T-cell (primary cell): ENCODE measurements at regions of chr9 and their contacts with region 1.

Region 1: DNA sequence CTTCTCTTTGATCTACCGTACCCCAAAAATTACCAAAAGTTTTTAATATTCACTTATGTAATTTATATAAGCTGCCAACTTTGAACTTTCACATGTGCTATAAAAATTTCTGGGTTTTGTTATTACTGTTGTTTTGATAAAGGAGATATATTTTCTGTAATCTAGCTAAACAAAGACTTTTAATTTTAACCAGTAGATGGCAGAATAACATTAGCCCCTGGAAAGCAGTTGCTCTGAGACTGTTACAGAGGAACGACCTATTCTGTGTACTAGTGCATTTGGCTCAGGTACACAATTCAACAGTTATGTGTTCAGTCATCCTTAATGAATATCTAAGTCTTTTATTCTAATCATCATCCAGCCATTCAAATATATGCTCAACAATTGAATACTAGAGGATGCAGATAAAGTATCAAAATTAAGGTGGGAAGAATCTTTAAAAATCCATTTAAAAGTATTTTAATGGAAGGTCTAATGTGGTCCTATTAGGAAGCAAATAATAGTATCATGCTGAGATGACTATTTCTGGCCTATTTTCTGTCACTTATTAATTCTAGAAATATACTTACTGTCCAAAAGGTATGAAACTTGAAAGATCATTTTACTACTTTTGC is 8.6 kb downstream of the KLHL9 start:
- DNase-seq: peak in 4 of 35 experiments; percentile 3 to 74 (median 5)
- ATAC-seq: peak; percentile 80 to 91 (median 88)
- H3K4me3 ChIP-seq: no peak overlapping the region
- H3K4me3 Mint-ChIP-seq: no peak overlapping the region
- H3K27ac ChIP-seq: no peak overlapping the region
- H3K27ac Mint-ChIP-seq: peak overlapping the region; percentile 62 to 74
- H3K4me1 ChIP-seq: peaks cover 5 to 17% of the 10 kb centered on the region in 2 experiments
- H3K4me1 Mint-ChIP-seq: peaks cover 50 to 59% (median 53%) of the 10 kb centered on the region in 3 donors
- H3K27me3 ChIP-seq: no peaks in the 10 kb centered on the region
- H3K27me3 Mint-ChIP-seq: no peaks in the 10 kb centered on the region

Region 2: DNA sequence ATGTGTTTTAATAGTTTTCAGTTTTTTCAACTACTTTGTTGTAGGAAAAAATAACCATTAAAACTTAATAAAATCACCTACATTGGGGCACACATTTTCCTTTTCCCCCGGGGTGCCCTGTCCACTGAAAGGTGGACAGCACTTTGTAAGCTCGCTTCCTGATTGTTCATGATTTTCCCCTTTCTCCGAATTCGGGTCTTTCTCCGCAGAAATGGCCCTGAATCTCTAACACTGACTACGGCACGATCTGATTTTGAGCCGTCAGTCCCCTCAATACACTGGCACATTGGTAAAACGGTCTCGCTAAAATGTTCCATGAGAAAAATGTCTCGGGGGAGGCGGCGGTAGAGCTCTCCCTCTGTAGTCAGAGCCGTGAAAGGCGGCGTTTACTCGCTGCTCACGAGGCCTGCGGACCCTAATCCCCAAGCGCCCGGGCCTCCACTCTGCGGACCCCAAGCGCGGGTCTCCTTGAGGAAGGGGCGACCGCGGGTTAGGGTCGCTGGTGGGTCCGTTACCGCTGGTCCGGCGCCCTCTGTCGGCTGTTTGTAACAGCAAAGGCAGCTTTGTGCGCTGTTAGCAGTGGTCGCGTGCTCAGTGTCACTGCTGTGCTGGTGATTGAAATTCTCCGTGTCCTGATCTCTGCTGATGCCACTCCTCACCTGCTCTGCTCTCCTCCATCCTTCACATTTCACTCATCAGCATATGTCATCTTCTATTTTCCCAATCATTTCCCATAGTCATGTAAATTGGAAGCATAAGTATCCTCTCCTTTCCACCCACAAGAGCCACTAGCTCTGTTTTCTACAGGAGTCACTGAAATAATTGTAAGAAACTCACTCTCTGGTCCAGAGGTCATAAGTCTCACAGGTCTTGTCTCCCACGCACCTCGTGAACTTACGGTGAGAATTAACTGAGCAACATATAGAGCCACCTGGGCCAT is 69.4 kb after region 1 on chr9:
- CTCF ChIA-PET with region 1: interaction called, 19 to 80 read pairs
- POLR2A ChIA-PET with region 1: interaction called in 1 of 2 experiments, 4 read pairs
- DNase-seq: peak in 32 of 35 experiments; percentile 22 to 74 (median 46)
- ATAC-seq: peak; percentile 80 to 85 (median 83)
- H3K4me3 ChIP-seq: peak overlapping the region; percentile 37 to 84
- H3K4me3 Mint-ChIP-seq: peak overlapping the region; percentile 62 to 77 (median 71)
- H3K27ac ChIP-seq: no peak overlapping the region
- H3K27ac Mint-ChIP-seq: no peak overlapping the region
- H3K4me1 ChIP-seq: peaks cover 0 to 8% of the 10 kb centered on the region in 2 experiments
- H3K4me1 Mint-ChIP-seq: peaks cover 5 to 11% (median 6%) of the 10 kb centered on the region in 3 donors
- H3K27me3 ChIP-seq: peaks cover 2 to 21% of the 10 kb centered on the region in 2 experiments
- H3K27me3 Mint-ChIP-seq: peaks cover 46 to 69% of the 10 kb centered on the region in 2 donors

Region 3: GRCh38 chr9:21434202-21435014 is 107.8 kb after region 1 on chr9:
- CTCF ChIA-PET with region 1: interaction called, 3 to 26 read pairs
- POLR2A ChIA-PET with region 1: no interaction called
- DNase-seq: peak in 27 of 35 experiments; percentile 13 to 71 (median 34)
- ATAC-seq: peak in 1 of 4 experiments; percentile 35
- H3K4me3 ChIP-seq: no peak overlapping the region
- H3K4me3 Mint-ChIP-seq: no peak overlapping the region
- H3K27ac ChIP-seq: no peak overlapping the region
- H3K27ac Mint-ChIP-seq: no peak overlapping the region
- H3K4me1 ChIP-seq: no peaks in the 10 kb centered on the region
- H3K4me1 Mint-ChIP-seq: no peaks in the 10 kb centered on the region
- H3K27me3 ChIP-seq: peaks cover 0 to 12% of the 10 kb centered on the region in 2 experiments
- H3K27me3 Mint-ChIP-seq: peaks cover 25 to 27% of the 10 kb centered on the region in 2 donors

Region 4: GRCh38 chr9:21455320-21455719 is 128.7 kb after region 1 on chr9:
- CTCF ChIA-PET with region 1: interaction called, 8 to 16 read pairs
- POLR2A ChIA-PET with region 1: no interaction called
- DNase-seq: peak in 19 of 35 experiments; percentile 2 to 62 (median 10)
- ATAC-seq: peak; percentile 63 to 87 (median 70)
- H3K4me3 ChIP-seq: no peak overlapping the region
- H3K4me3 Mint-ChIP-seq: no peak overlapping the region
- H3K27ac ChIP-seq: no peak overlapping the region
- H3K27ac Mint-ChIP-seq: no peak overlapping the region
- H3K4me1 ChIP-seq: no peaks in the 10 kb centered on the region
- H3K4me1 Mint-ChIP-seq: peaks cover 0 to 2% (median 0%) of the 10 kb centered on the region in 3 donors
- H3K27me3 ChIP-seq: no peaks in the 10 kb centered on the region
- H3K27me3 Mint-ChIP-seq: peaks cover 7 to 32% of the 10 kb centered on the region in 2 donors

Region 5: GRCh38 chr9:21465859-21466518 is 139.4 kb after region 1 on chr9:
- CTCF ChIA-PET with region 1: interaction called, 6 to 17 read pairs
- POLR2A ChIA-PET with region 1: no interaction called
- DNase-seq: peak in 2 of 35 experiments; percentile 21 to 74
- ATAC-seq: peak in 3 of 4 experiments; percentile 53 to 73 (median 72)
- H3K4me3 ChIP-seq: no peak overlapping the region
- H3K4me3 Mint-ChIP-seq: no peak overlapping the region
- H3K27ac ChIP-seq: no peak overlapping the region
- H3K27ac Mint-ChIP-seq: no peak overlapping the region
- H3K4me1 ChIP-seq: no peaks in the 10 kb centered on the region
- H3K4me1 Mint-ChIP-seq: peaks cover 0 to 2% (median 0%) of the 10 kb centered on the region in 3 donors
- H3K27me3 ChIP-seq: peaks cover 0 to 6% of the 10 kb centered on the region in 2 experiments
- H3K27me3 Mint-ChIP-seq: peaks cover 4 to 9% of the 10 kb centered on the region in 2 donors

Region 6: DNA sequence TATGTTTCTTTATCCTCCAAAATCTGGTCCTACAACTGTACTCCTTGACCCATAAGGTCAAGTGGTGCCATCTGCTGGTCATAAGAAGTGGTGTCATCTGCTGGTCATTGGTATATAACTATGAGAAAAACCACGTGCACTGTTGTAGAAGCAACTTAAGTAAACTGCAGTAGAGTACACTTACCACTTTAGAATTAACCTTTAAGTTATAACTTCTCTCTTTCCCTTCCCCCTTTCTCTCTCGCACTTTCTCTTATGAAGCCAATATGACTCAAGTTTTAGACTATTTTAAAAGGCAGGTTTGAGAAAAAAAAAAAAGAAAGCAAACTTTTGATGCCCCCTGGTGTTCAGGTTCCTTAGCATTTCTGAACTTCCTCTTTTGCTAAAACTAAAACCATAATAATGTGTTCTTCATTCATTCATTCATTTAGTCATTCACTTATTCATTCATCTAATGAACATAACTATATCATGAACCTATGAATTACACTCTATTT is 463.0 kb after region 1 on chr9:
- CTCF ChIA-PET with region 1: interaction called, 6 to 13 read pairs
- POLR2A ChIA-PET with region 1: no interaction called
- DNase-seq: peak in 32 of 35 experiments; percentile 12 to 89 (median 38)
- ATAC-seq: peak; percentile 91 to 99 (median 95)
- H3K4me3 ChIP-seq: peak overlapping the region in 1 of 2 donors; percentile 23
- H3K4me3 Mint-ChIP-seq: peak overlapping the region; percentile 35 to 74 (median 61)
- H3K27ac ChIP-seq: no peak overlapping the region
- H3K27ac Mint-ChIP-seq: peak overlapping the region; percentile 31 to 40
- H3K4me1 ChIP-seq: no peaks in the 10 kb centered on the region
- H3K4me1 Mint-ChIP-seq: peaks cover 0 to 4% (median 0%) of the 10 kb centered on the region in 3 donors
- H3K27me3 ChIP-seq: peaks cover 3 to 5% of the 10 kb centered on the region in 2 experiments
- H3K27me3 Mint-ChIP-seq: peaks cover 3 to 11% of the 10 kb centered on the region in 2 donors